CD4-positive, alpha-beta memory T cell (primary cell): ENCODE measurements at regions of chr19 and their contacts with region 1.

Region 1: GRCh38 chr19:52269338-52270261 is at the start of gene ZNF766:
- DNase-seq: peak; percentile 95 to 96 (median 96)
- H3K4me3 ChIP-seq: peak within 1 kb of the TSS; percentile 64 to 90
- H3K4me3 Mint-ChIP-seq: peak within 1 kb of the TSS; percentile 92 to 99 (median 98)
- H3K27ac ChIP-seq: peak within 1 kb of the TSS; percentile 90
- H3K27ac Mint-ChIP-seq: peak within 1 kb of the TSS; percentile 93 to 98 (median 96)
- H3K4me1 ChIP-seq: peaks cover 42% of the 10 kb centered on the region
- H3K4me1 Mint-ChIP-seq: peaks cover 32 to 56% (median 42%) of the 10 kb centered on the region in 4 donors
- H3K27me3 ChIP-seq: no peaks in the 10 kb centered on the region
- H3K27me3 Mint-ChIP-seq: no peaks in the 10 kb centered on the region
- total RNA-seq, gene ZNF766: 53.6 to 54.1 TPM

Region 2: DNA sequence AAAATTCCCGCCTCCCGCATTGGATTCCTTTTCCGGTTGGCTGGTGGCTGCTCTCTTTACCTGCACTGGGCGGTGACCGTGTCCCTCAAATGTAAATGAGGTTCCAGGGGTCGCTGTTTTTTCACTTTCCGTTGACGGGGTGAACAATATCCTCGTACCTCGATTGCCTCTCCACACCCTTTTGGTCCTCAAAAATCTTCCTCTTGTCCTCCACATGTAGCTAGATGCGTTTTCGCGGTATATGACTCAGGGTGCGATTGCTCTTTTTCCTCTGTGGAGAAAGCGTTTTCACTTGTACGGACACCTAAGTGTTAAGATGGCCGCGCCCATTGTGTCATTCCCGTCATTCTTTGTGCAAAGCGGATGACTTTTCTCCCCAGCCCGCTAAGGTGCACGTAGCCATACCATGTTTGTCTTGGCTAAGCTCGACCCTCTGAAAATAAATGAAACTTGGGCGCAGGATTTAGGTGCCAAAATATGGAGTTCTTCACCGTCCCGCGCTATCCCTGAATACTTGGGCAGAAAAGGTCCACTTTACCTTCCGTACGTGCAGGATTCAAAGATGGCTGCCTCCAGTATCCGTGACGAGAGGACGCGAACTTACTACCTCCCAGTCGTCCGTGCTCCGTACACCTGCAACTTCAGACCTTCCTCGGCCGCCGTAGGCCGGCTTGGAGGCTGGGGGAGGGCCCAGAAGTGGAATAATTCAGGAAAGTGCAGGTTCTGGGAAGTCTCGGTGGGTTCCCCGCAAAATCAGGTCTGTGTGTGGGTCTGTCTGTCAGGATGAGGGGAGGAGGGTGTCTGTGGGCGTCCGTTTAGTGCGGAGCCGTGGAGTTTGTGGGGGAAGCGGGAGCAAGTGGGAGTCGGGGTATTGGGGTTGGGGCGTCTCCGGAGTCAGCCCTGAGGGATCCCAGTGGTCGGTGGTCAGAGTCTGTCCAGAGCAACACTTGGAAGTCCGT is 342.5 kb before region 1 on chr19 and contains the start of gene ZNF613:
- CTCF ChIA-PET with region 1: no interaction called
- POLR2A ChIA-PET with region 1: no interaction called
- intact Hi-C with region 1: loop called (anchors 10 kb)
- DNase-seq: peak; percentile 81 to 89 (median 85)
- H3K4me3 ChIP-seq: peak within 1 kb of the TSS; percentile 85 to 91
- H3K4me3 Mint-ChIP-seq: peak within 1 kb of the TSS; percentile 93 to 99 (median 98)
- H3K27ac ChIP-seq: peak within 1 kb of the TSS; percentile 55
- H3K27ac Mint-ChIP-seq: peak within 1 kb of the TSS; percentile 82 to 97 (median 95)
- H3K4me1 ChIP-seq: peaks cover 11% of the 10 kb centered on the region
- H3K4me1 Mint-ChIP-seq: peaks cover 16 to 38% (median 24%) of the 10 kb centered on the region in 4 donors
- H3K27me3 ChIP-seq: no peaks in the 10 kb centered on the region
- H3K27me3 Mint-ChIP-seq: peaks cover 0 to 2% of the 10 kb centered on the region in 2 donors
- total RNA-seq, gene ZNF613: 8.0 to 8.9 TPM

Region 3: GRCh38 chr19:52139252-52140031 is 130.2 kb before region 1 on chr19 and contains the start of gene ZNF616:
- CTCF ChIA-PET with region 1: no interaction called
- POLR2A ChIA-PET with region 1: no interaction called
- intact Hi-C with region 1: loop called (anchors 1 kb)
- DNase-seq: peak; percentile 64 to 97 (median 96)
- H3K4me3 ChIP-seq: peak within 1 kb of the TSS; percentile 72 to 75
- H3K4me3 Mint-ChIP-seq: peak within 1 kb of the TSS; percentile 90 to 98 (median 96)
- H3K27ac ChIP-seq: peak within 1 kb of the TSS; percentile 75
- H3K27ac Mint-ChIP-seq: peak within 1 kb of the TSS; percentile 91 to 98 (median 94)
- H3K4me1 ChIP-seq: peaks cover 18% of the 10 kb centered on the region
- H3K4me1 Mint-ChIP-seq: peaks cover 23 to 38% (median 29%) of the 10 kb centered on the region in 4 donors
- H3K27me3 ChIP-seq: no peaks in the 10 kb centered on the region
- H3K27me3 Mint-ChIP-seq: no peaks in the 10 kb centered on the region
- total RNA-seq, gene ZNF616: 18.6 to 19.0 TPM

Region 4: GRCh38 chr19:52296773-52297600 is 27.4 kb after region 1 on chr19 and contains the start of gene ZNF480:
- CTCF ChIA-PET with region 1: no interaction called
- POLR2A ChIA-PET with region 1: interaction called, 3 read pairs
- intact Hi-C with region 1: loop called (anchors 1 kb)
- DNase-seq: peak; percentile 87 to 89 (median 87)
- H3K4me3 ChIP-seq: peak within 1 kb of the TSS; percentile 89 to 92
- H3K4me3 Mint-ChIP-seq: peak within 1 kb of the TSS; percentile 94 to 99 (median 96)
- H3K27ac ChIP-seq: peak within 1 kb of the TSS; percentile 72
- H3K27ac Mint-ChIP-seq: peak within 1 kb of the TSS; percentile 97 to 100 (median 98)
- H3K4me1 ChIP-seq: peaks cover 16% of the 10 kb centered on the region
- H3K4me1 Mint-ChIP-seq: peaks cover 17 to 24% (median 19%) of the 10 kb centered on the region in 4 donors
- H3K27me3 ChIP-seq: no peaks in the 10 kb centered on the region
- H3K27me3 Mint-ChIP-seq: peaks cover 0 to 3% of the 10 kb centered on the region in 2 donors
- total RNA-seq, gene ZNF480: 26.7 to 26.9 TPM

Region 5: DNA sequence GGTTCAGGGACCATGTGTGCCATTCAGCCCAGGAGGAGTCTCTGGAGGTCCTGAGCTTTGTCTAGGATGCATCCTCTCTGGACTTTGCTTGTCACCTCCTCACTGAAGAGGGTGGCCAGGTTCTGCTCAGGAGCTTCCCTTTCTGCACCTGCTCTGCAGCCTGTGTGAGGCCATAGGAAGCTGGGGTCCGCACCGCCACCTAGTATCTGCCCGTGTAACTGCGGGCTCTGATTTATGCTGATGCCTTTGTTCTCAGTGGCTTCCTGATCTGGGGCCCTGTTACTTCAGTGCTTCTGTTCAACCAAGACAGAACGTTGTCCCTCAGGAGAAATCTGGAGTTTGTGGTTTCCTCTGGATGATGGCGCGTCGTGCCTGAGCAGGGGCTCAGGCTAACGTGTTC is 81.9 kb after region 1 on chr19:
- CTCF ChIA-PET with region 1: no interaction called
- POLR2A ChIA-PET with region 1: no interaction called
- intact Hi-C with region 1: no loop called
- DNase-seq: no peak
- H3K4me3 ChIP-seq: no peak overlapping the region
- H3K4me3 Mint-ChIP-seq: no peak overlapping the region
- H3K27ac ChIP-seq: no peak overlapping the region
- H3K27ac Mint-ChIP-seq: no peak overlapping the region
- H3K4me1 ChIP-seq: no peaks in the 10 kb centered on the region
- H3K4me1 Mint-ChIP-seq: peaks cover 0 to 1% (median 0%) of the 10 kb centered on the region in 4 donors
- H3K27me3 ChIP-seq: no peaks in the 10 kb centered on the region
- H3K27me3 Mint-ChIP-seq: no peaks in the 10 kb centered on the region

Region 6: GRCh38 chr19:52535771-52536447 is 266.3 kb after region 1 on chr19:
- CTCF ChIA-PET with region 1: no interaction called
- POLR2A ChIA-PET with region 1: no interaction called
- intact Hi-C with region 1: loop called (anchors 1 kb)
- DNase-seq: peak; percentile 79 to 93 (median 83)
- H3K4me3 ChIP-seq: peak overlapping the region; percentile 84 to 90
- H3K4me3 Mint-ChIP-seq: peak overlapping the region; percentile 87 to 97 (median 94)
- H3K27ac ChIP-seq: peak overlapping the region; percentile 80
- H3K27ac Mint-ChIP-seq: peak overlapping the region; percentile 84 to 97 (median 89)
- H3K4me1 ChIP-seq: peaks cover 12% of the 10 kb centered on the region
- H3K4me1 Mint-ChIP-seq: peaks cover 10 to 49% (median 32%) of the 10 kb centered on the region in 4 donors
- H3K27me3 ChIP-seq: no peaks in the 10 kb centered on the region
- H3K27me3 Mint-ChIP-seq: no peaks in the 10 kb centered on the region